ENCODE measurements at regions of chr18 and their contacts with region 1.

Region 1: GRCh38 chr18:62186774-62187542 is at the starts of genes PIGN and RELCH:
- DNase-seq: peak; percentile 98
- H3K4me3 ChIP-seq: peak within 1 kb of the TSS; percentile 78 to 96
- H3K27ac ChIP-seq: peak within 1 kb of the TSS; percentile 64 to 65
- H3K4me1 ChIP-seq: peaks cover 12% of the 10 kb centered on the region
- H3K27me3 ChIP-seq: no peaks in the 10 kb centered on the region
- CTCF ChIP-seq: no peak
- POLR2A ChIP-seq: no peak
- total RNA-seq, gene PIGN: 30.6 TPM
- total RNA-seq, gene RELCH: 27.2 to 41.6 TPM

Region 2: DNA sequence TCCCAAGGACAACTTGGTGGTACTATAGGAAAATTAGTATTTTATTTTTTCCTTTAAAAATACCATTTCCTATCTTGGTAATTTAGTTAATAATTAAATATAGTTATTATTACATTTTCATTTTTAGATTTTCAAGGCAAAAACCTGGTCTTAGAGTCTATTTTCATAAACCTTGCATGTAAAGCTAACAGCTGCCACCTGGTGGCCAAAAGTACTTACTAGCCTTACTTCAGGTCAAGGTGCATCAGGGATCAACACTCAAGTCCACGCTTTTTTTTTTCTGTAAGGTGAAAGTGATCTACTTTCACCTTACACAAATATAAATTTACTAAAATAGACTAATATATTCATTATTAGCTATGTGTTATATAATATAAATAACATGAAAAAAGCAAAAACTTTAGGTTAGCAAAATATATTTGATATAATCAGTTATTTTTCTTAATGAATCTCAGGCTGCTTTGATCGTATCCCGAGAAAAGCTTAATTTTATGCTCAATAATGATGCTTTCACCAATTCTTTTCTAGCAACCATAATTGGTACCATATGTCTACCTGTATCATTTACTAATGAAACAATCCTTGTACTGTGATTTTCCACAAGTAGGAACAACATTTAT is 62.6 kb after region 1 on chr18:
- intact Hi-C with region 1: loop called (anchors 10 kb)
- DNase-seq: peak; percentile 93
- H3K4me3 ChIP-seq: no peak overlapping the region
- H3K27ac ChIP-seq: no peak overlapping the region
- H3K4me1 ChIP-seq: no peaks in the 10 kb centered on the region
- H3K27me3 ChIP-seq: no peaks in the 10 kb centered on the region
- CTCF ChIP-seq: peak; percentile 28 to 82 (median 63)
- POLR2A ChIP-seq: no peak

Region 3: GRCh38 chr18:62584241-62585120 is 397.5 kb after region 1 on chr18:
- intact Hi-C with region 1: loop called (anchors 10 kb)
- DNase-seq: peak; percentile 93
- H3K4me3 ChIP-seq: no peak overlapping the region
- H3K27ac ChIP-seq: no peak overlapping the region
- H3K4me1 ChIP-seq: peaks cover 10% of the 10 kb centered on the region
- H3K27me3 ChIP-seq: no peaks in the 10 kb centered on the region
- CTCF ChIP-seq: peak; percentile 95 to 99 (median 99)
- POLR2A ChIP-seq: no peak